WTC11 (cell line): ENCODE measurements at regions of chr17 and their contacts with region 1.

Region 1: GRCh38 chr17:48024937-48025906 is 12.4 kb downstream of the COPZ2 start:
- DNase-seq: peak; percentile 98
- ATAC-seq: peak; percentile 62
- H3K4me3 Mint-ChIP-seq: peak overlapping the region; percentile 74
- H3K27ac Mint-ChIP-seq: no peak overlapping the region
- H3K4me1 Mint-ChIP-seq: peaks cover 25% of the 10 kb centered on the region
- H3K27me3 Mint-ChIP-seq: peaks cover 39% of the 10 kb centered on the region
- CTCF ChIP-seq: peak; percentile 71

Region 2: GRCh38 chr17:47663912-47664625 is 361.2 kb before region 1 on chr17:
- CTCF ChIA-PET with region 1: no interaction called
- POLR2A ChIA-PET with region 1: no interaction called
- DNase-seq: peak; percentile 62
- ATAC-seq: peak; percentile 85
- H3K4me3 Mint-ChIP-seq: no peak overlapping the region; the same call in 1 of the 2 replicates
- H3K27ac Mint-ChIP-seq: peak overlapping the region; percentile 95
- H3K4me1 Mint-ChIP-seq: peaks cover 15% of the 10 kb centered on the region
- H3K27me3 Mint-ChIP-seq: no peaks in the 10 kb centered on the region
- CTCF ChIP-seq: peak; percentile 75; the same call in 1 of the 2 replicates

Region 3: GRCh38 chr17:47915776-47916398 is 109.3 kb before region 1 on chr17:
- CTCF ChIA-PET with region 1: no interaction called
- POLR2A ChIA-PET with region 1: no interaction called
- DNase-seq: no peak
- ATAC-seq: no peak
- H3K4me3 Mint-ChIP-seq: no peak overlapping the region
- H3K27ac Mint-ChIP-seq: no peak overlapping the region
- H3K4me1 Mint-ChIP-seq: no peaks in the 10 kb centered on the region
- H3K27me3 Mint-ChIP-seq: no peaks in the 10 kb centered on the region
- CTCF ChIP-seq: no peak

Region 4: DNA sequence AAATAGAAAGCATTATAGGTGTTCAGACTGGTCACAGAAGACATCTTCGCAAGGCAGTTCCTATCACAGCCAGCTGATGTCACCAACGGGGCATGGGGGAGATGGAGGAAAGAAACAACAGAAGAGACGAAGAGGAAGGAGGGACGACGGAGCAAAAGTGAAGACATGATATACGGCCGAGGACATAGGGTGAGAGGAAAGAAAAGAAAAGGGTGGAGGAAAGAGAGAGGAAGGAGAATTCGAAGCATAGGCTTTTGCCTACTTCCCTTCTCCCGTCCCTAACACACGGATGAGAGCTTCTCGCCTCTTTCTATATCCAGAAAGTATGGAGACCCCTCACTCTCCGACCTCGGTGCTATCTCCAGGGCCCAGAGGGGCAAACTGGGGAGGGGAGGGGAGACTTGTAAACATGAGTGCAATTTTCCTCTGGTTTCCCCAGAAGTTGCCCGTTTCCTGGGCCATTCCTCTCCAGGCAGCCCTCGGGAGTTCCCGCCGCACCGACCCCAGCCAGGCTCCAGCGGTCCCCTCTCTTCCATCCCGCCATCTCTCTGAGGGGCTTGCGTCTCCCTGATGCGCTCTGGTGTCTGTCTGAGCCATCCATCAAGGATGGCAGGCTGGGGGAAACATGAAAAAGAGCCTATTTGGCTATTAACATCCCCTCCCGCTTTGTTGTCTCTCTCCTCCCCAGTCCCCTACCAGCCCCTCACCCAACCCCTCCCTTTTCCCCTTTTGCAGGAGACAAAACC is 13.6 kb before region 1 on chr17:
- CTCF ChIA-PET with region 1: interaction called, 11 read pairs
- POLR2A ChIA-PET with region 1: interaction called, 4 read pairs
- DNase-seq: peak; percentile 59
- ATAC-seq: peak; percentile 79
- H3K4me3 Mint-ChIP-seq: peak overlapping the region; percentile 88
- H3K27ac Mint-ChIP-seq: no peak overlapping the region
- H3K4me1 Mint-ChIP-seq: peaks cover 23% of the 10 kb centered on the region
- H3K27me3 Mint-ChIP-seq: peaks cover 26% of the 10 kb centered on the region
- CTCF ChIP-seq: no peak

Region 5: GRCh38 chr17:48047741-48048383 is 22.6 kb after region 1 on chr17 and contains the start of gene NFE2L1:
- CTCF ChIA-PET with region 1: interaction called, 108 read pairs
- POLR2A ChIA-PET with region 1: interaction called, 12 read pairs
- DNase-seq: peak; percentile 99
- ATAC-seq: peak; percentile 95
- H3K4me3 Mint-ChIP-seq: peak within 1 kb of the TSS; percentile 93
- H3K27ac Mint-ChIP-seq: peak within 1 kb of the TSS; percentile 100
- H3K4me1 Mint-ChIP-seq: peaks cover 55% of the 10 kb centered on the region
- H3K27me3 Mint-ChIP-seq: no peaks in the 10 kb centered on the region
- CTCF ChIP-seq: no peak
- total RNA-seq, gene NFE2L1: 130 to 149 TPM (median 131 TPM) in 3 replicates

Region 6: GRCh38 chr17:48060249-48060648 is 35.0 kb after region 1 on chr17:
- CTCF ChIA-PET with region 1: interaction called, 66 read pairs
- POLR2A ChIA-PET with region 1: interaction called, 22 read pairs
- DNase-seq: no peak
- ATAC-seq: no peak
- H3K4me3 Mint-ChIP-seq: no peak overlapping the region
- H3K27ac Mint-ChIP-seq: peak overlapping the region; percentile 65; the same call in 1 of the 2 replicates
- H3K4me1 Mint-ChIP-seq: peaks cover 25% of the 10 kb centered on the region
- H3K27me3 Mint-ChIP-seq: no peaks in the 10 kb centered on the region
- CTCF ChIP-seq: no peak

Region 7: DNA sequence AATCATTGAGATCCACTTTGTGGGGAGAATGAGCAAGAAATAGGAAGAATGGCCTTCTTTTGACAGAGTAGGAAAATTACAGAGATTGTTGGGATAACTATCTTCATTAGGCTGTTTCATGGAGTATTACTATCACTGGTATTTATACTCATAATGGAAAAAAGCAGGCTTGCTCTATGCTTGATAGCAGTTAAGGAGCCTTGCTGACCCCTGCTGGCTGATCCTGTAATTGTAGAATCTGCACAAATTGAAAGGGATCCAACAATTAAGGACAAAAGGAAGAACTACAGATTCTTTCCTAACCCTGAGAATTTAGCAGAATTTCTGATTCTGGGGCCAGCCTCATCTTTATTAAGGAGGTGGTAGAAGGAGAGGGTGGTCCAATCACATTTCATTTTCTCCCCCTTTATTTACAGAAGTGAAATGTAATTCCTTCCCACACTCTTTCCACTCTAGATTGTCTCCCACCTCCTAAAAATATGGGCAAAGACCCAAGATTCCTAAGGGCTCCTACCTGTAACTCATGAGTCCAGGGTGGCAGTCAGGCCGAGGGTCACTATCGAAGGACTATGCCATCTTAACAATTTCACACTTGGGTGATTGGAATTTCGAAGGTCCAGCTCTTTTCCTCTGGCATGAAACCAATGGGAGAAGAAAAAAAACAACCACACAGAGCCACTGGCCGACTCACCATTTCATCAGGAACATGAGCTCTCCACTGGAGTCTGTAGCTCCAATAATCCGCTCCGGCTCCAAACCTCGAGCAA is 49.3 kb after region 1 on chr17:
- CTCF ChIA-PET with region 1: interaction called, 40 read pairs
- POLR2A ChIA-PET with region 1: interaction called, 7 read pairs
- DNase-seq: peak; percentile 80
- ATAC-seq: peak; percentile 67
- H3K4me3 Mint-ChIP-seq: no peak overlapping the region
- H3K27ac Mint-ChIP-seq: peak overlapping the region; percentile 55
- H3K4me1 Mint-ChIP-seq: no peaks in the 10 kb centered on the region
- H3K27me3 Mint-ChIP-seq: no peaks in the 10 kb centered on the region
- CTCF ChIP-seq: peak; percentile 35; the same call in 1 of the 2 replicates

Region 8: GRCh38 chr17:48107168-48108132 is 82.2 kb after region 1 on chr17 and contains the start of gene SNX11:
- CTCF ChIA-PET with region 1: interaction called, 16 read pairs
- POLR2A ChIA-PET with region 1: no interaction called
- DNase-seq: peak; percentile 97
- ATAC-seq: peak; percentile 96
- H3K4me3 Mint-ChIP-seq: peak within 1 kb of the TSS; percentile 89
- H3K27ac Mint-ChIP-seq: peak within 1 kb of the TSS; percentile 83
- H3K4me1 Mint-ChIP-seq: peaks cover 11% of the 10 kb centered on the region
- H3K27me3 Mint-ChIP-seq: peaks cover 8% of the 10 kb centered on the region; the same call in 1 of the 2 replicates
- CTCF ChIP-seq: no peak
- total RNA-seq, gene SNX11: 19.3 to 24.5 TPM (median 20.1 TPM) in 3 replicates

Region 9: GRCh38 chr17:48139944-48140343 is 114.7 kb after region 1 on chr17:
- CTCF ChIA-PET with region 1: interaction called, 23 read pairs
- POLR2A ChIA-PET with region 1: no interaction called
- DNase-seq: no peak
- ATAC-seq: no peak
- H3K4me3 Mint-ChIP-seq: no peak overlapping the region
- H3K27ac Mint-ChIP-seq: no peak overlapping the region
- H3K4me1 Mint-ChIP-seq: peaks cover 7% of the 10 kb centered on the region
- H3K27me3 Mint-ChIP-seq: no peaks in the 10 kb centered on the region
- CTCF ChIP-seq: no peak